MCF 10A (cell line): ENCODE measurements at regions of chr9 and their contacts with region 1.

Region 1: DNA sequence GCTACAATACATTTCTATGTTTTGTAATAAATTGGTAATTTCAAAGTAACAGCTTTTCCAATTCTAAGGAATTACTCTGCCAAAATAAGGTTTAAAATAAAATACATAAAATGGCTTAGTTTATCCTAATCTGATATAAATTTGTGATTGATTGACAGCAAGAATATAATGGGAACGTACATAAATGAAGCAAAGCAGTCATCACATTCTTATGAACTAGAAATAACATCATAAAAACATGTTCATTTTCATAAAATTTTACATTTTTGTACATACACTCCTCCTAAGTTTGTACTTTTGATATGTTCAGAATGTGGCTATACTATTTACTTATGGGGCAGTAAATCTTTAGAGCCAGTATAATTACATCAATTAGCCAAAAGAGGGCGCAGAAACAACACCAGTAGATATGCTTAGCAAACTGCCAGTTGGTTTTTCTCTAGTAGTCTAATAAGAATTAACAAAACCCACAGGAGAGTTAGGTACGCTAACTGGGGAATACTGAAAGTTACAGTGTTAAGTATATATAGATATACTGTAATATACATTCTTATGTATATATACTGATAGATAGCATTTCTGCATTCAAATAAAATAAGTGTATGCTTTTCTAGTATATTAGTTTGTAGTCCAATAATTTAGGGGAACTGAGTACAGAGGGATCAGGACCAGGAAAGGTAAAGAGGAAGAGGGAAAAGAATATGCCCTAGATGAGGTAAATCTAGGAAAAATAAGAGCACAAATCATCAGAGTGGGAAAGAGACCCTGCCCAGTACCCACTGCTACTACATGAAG is 76.8 kb downstream of the ZDHHC21 start:
- DNase-seq: peak; percentile 65
- H3K4me3 Mint-ChIP-seq: no peak overlapping the region
- H3K27ac Mint-ChIP-seq: no peak overlapping the region
- H3K4me1 Mint-ChIP-seq: no peaks in the 10 kb centered on the region
- H3K27me3 Mint-ChIP-seq: no peaks in the 10 kb centered on the region
- CTCF ChIP-seq: peak; percentile 66

Region 2: DNA sequence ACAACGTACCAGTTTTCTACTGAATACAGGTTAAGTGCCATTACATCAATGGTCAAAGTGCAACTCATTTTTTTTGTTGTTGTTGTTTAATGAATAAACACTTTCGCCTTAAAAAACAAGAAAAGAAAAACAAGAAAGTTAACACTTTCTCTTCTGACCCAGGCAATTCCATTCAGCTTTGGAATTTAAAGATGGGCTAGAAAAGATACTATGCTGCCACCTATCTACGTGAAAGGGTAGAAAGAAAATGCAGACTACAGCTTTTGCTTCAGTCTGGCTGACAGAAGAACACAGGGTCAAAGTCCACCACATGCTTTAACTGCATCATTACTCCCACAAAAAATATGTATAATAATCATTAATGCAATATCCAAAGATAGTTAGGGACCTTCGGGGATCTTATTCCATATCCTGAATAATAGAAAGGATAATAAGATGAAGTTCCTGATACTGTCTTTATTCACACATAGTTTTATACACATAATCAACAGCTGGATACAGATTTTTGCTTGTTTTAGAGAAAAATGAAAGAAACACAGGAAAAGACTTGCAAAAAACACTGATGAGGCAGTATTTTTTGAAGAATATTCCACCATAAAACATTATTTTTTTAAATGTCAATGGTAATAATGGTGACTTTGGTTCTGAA is 36.5 kb after region 1 on chr9:
- CTCF ChIA-PET with region 1: interaction called, 4 read pairs
- POLR2A ChIA-PET with region 1: no interaction called
- intact Hi-C with region 1: loop called (anchors 5 kb)
- DNase-seq: peak; percentile 3
- H3K4me3 Mint-ChIP-seq: no peak overlapping the region
- H3K27ac Mint-ChIP-seq: no peak overlapping the region
- H3K4me1 Mint-ChIP-seq: no peaks in the 10 kb centered on the region
- H3K27me3 Mint-ChIP-seq: no peaks in the 10 kb centered on the region
- CTCF ChIP-seq: peak; percentile 31

Region 3: DNA sequence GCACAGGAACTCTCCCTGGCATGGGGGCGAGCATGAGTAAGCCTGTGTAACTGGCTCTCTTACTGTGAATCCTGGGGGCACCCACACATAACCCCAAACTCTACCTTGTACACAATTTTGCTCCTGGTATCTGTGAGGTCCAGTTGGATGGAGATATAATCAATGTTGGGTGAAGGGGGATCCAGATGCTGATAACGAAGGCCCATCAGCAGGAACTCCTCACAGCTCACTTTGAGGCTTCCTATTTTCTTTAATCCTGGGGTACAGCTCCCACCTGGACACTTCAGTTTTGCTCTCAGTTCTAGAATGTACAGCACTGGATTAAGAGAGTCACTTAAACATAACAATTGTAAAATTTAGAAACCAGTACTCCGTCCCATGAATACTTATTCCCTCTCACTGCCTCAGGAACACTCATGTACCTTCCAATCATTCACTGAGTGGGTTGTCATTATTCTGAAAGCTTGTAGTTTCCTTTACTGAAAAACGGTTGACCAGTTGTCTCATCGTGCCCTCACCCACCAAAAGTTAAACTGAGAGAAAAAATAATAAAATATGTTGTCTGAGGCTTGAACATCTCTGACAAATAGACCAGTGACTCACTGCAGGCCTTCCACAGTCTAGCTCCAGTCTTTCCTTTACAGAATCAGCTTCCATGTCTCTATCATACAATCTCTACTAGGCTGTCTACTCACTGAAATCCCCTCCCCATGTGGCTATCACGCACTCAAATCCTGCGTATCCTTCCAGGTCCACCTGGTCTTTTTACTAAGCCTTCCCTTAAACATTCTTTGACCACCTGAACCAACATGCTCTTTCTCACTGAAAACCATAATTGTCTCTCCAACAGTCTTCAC is 241.3 kb after region 1 on chr9:
- CTCF ChIA-PET with region 1: no interaction called
- POLR2A ChIA-PET with region 1: no interaction called
- intact Hi-C with region 1: loop called (anchors 10 kb)
- DNase-seq: no peak
- H3K4me3 Mint-ChIP-seq: no peak overlapping the region
- H3K27ac Mint-ChIP-seq: no peak overlapping the region
- H3K4me1 Mint-ChIP-seq: no peaks in the 10 kb centered on the region
- H3K27me3 Mint-ChIP-seq: peaks cover 44% of the 10 kb centered on the region
- CTCF ChIP-seq: no peak